ENCODE measurements at regions of chr22 and their contacts with region 1.

Region 1: GRCh38 chr22:22959147-22959827 is 71.7 kb downstream of the IGLL5 start:
- DNase-seq: peak; percentile 85
- H3K4me3 Mint-ChIP-seq: no peak overlapping the region
- H3K27ac Mint-ChIP-seq: no peak overlapping the region
- H3K4me1 Mint-ChIP-seq: no peaks in the 10 kb centered on the region
- H3K27me3 Mint-ChIP-seq: peaks cover 33% of the 10 kb centered on the region
- CTCF ChIP-seq: peak; percentile 96

Region 2: GRCh38 chr22:22463855-22464540 is 495.3 kb before region 1 on chr22:
- CTCF ChIA-PET with region 1: interaction called, 73 read pairs
- POLR2A ChIA-PET with region 1: no interaction called
- intact Hi-C with region 1: loop called (anchors 2 kb)
- DNase-seq: peak; percentile 71
- H3K4me3 Mint-ChIP-seq: no peak overlapping the region
- H3K27ac Mint-ChIP-seq: no peak overlapping the region
- H3K4me1 Mint-ChIP-seq: peaks cover 3% of the 10 kb centered on the region
- H3K27me3 Mint-ChIP-seq: peaks cover 36% of the 10 kb centered on the region
- CTCF ChIP-seq: peak; percentile 69

Region 3: DNA sequence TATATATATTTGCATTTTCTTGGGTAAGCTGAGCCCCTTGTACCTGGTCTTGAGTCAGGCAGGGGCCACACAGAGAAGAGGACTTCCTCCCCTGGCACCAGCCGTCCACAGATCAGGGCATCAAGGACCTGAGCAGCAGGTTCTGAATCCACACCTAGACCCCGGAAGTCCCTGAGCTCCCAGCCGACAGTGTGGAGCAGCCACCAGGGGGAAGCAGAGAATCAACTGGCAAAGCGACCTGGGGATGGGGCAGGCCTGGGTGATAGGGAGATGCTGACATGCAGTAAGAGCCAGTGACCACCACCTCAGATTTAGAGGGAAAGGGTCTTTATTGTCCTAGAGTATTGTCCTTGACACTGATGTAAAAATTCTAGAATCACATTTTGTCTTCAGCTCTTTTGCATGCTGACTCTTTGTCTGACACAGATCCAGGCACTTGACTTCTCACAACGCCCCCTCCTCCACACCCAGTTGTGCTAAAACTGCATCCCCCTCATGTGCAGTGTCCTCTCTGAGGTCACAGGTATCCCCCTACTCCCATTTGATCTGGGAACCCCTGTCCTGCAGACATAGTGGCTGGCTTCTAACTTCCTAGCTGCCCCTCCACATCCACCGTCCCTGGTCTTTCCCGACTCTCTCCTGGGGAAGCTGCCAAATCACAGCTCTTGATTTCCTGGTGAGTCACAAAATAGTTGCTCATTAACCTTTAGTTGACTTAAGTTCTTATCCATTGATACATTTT is 205.6 kb before region 1 on chr22:
- CTCF ChIA-PET with region 1: interaction called, 16 read pairs
- POLR2A ChIA-PET with region 1: no interaction called
- intact Hi-C with region 1: no loop called
- DNase-seq: peak; percentile 72
- H3K4me3 Mint-ChIP-seq: no peak overlapping the region
- H3K27ac Mint-ChIP-seq: no peak overlapping the region
- H3K4me1 Mint-ChIP-seq: peaks cover 27% of the 10 kb centered on the region
- H3K27me3 Mint-ChIP-seq: no peaks in the 10 kb centered on the region
- CTCF ChIP-seq: peak; percentile 69

Region 4: GRCh38 chr22:22848364-22848866 is 110.9 kb before region 1 on chr22:
- CTCF ChIA-PET with region 1: interaction called, 94 read pairs
- POLR2A ChIA-PET with region 1: no interaction called
- intact Hi-C with region 1: loop called (anchors 1 kb)
- DNase-seq: peak; percentile 69
- H3K4me3 Mint-ChIP-seq: no peak overlapping the region
- H3K27ac Mint-ChIP-seq: no peak overlapping the region
- H3K4me1 Mint-ChIP-seq: no peaks in the 10 kb centered on the region
- H3K27me3 Mint-ChIP-seq: peaks cover 73% of the 10 kb centered on the region
- CTCF ChIP-seq: peak; percentile 75

Region 5: DNA sequence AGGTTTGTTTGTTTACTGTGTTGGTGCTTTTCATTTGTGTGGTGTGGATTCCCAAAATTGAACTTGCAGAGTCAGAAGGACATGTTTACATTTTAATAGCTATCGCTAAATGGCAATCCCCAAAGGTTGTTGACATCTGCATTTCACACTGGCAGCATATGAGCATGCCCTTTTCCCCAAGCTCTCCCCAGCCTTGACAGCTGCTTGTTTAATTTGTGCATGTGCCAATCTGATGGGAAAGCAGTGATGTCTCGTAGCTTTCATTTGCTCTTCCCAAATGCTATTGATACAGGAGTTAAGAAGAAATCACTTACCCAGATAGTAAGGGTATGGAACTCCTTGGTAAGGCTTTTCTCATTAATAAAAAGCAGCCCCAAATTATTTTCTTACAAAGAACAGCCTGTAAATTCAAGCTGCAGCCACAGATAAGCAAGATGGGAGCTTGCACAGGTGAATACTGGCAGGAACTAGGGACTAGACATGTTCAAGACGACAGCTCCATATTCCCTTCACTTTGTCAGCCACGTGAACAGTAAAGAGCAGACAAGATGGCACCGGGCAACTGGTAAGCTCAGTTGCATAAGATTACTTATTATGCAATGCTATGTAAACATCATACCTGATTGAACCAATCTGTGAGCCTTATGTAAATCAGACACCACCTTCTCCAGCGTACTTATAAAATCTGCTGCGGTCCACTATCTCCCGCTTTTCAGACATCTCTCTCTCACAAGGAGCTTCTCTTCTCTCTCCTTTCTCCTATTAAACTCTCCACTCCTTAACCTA is 15.7 kb after region 1 on chr22:
- CTCF ChIA-PET with region 1: interaction called, 10 read pairs
- POLR2A ChIA-PET with region 1: no interaction called
- intact Hi-C with region 1: no loop called
- DNase-seq: no peak
- H3K4me3 Mint-ChIP-seq: no peak overlapping the region
- H3K27ac Mint-ChIP-seq: no peak overlapping the region
- H3K4me1 Mint-ChIP-seq: no peaks in the 10 kb centered on the region
- H3K27me3 Mint-ChIP-seq: peaks cover 55% of the 10 kb centered on the region
- CTCF ChIP-seq: no peak

Region 6: DNA sequence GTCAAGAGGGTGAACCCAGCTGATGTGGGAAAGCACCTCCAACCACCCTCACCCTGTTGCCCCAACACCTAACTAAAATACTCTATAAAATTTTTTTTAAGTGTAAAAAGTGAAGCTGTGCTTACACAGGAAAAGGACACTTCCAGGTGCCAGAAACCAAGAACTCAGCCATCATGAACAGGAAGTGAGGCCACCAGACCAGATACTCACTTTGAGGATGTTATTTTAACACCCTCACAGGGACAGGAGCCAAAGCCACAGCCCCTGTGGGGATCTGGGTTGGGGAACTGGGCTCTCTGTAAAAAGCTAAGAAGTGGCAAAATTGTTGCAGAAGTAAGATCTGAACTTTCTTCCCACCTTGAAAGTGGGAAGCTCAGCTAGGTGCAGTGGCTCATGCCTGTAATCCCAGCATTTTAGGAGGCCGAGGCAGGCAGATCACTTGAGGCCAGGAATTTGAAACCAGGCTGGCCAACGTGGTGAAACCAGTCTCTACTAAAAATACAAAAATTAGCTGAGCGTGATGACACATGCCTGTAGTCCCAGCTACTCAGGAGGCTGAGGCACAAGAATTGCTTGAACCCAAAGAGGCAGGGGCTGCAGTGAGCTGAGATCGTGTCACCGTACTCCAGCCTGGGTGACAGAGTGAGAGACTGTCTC is 178.7 kb after region 1 on chr22:
- CTCF ChIA-PET with region 1: interaction called, 45 read pairs
- POLR2A ChIA-PET with region 1: no interaction called
- intact Hi-C with region 1: no loop called
- DNase-seq: no peak
- H3K4me3 Mint-ChIP-seq: no peak overlapping the region
- H3K27ac Mint-ChIP-seq: no peak overlapping the region
- H3K4me1 Mint-ChIP-seq: no peaks in the 10 kb centered on the region
- H3K27me3 Mint-ChIP-seq: no peaks in the 10 kb centered on the region
- CTCF ChIP-seq: no peak

Region 7: GRCh38 chr22:23240639-23241389 is 281.5 kb after region 1 on chr22:
- CTCF ChIA-PET with region 1: no interaction called
- POLR2A ChIA-PET with region 1: no interaction called
- intact Hi-C with region 1: no loop called
- DNase-seq: peak; percentile 64
- H3K4me3 Mint-ChIP-seq: no peak overlapping the region
- H3K27ac Mint-ChIP-seq: no peak overlapping the region
- H3K4me1 Mint-ChIP-seq: peaks cover 46% of the 10 kb centered on the region
- H3K27me3 Mint-ChIP-seq: no peaks in the 10 kb centered on the region
- CTCF ChIP-seq: peak; percentile 42

Region 8: GRCh38 chr22:23289851-23290724 is 330.8 kb after region 1 on chr22:
- CTCF ChIA-PET with region 1: interaction called, 11 read pairs
- POLR2A ChIA-PET with region 1: no interaction called
- intact Hi-C with region 1: loop called (anchors 10 kb)
- DNase-seq: peak; percentile 61
- H3K4me3 Mint-ChIP-seq: no peak overlapping the region
- H3K27ac Mint-ChIP-seq: no peak overlapping the region
- H3K4me1 Mint-ChIP-seq: peaks cover 6% of the 10 kb centered on the region
- H3K27me3 Mint-ChIP-seq: no peaks in the 10 kb centered on the region
- CTCF ChIP-seq: peak; percentile 76

Measured in MCF 10A (cell line).